ENCODE measurements at regions of chr5 and their contacts with region 1.

Region 1: GRCh38 chr5:66039296-66039695 is 104.8 kb upstream of the SREK1 start:
- DNase-seq: no peak

Region 2: GRCh38 chr5:65825408-65826328 is 213.6 kb before region 1 on chr5:
- intact Hi-C with region 1: loop called in 1 of 2 experiments (anchors 5 kb)
- DNase-seq: no peak

Region 3: DNA sequence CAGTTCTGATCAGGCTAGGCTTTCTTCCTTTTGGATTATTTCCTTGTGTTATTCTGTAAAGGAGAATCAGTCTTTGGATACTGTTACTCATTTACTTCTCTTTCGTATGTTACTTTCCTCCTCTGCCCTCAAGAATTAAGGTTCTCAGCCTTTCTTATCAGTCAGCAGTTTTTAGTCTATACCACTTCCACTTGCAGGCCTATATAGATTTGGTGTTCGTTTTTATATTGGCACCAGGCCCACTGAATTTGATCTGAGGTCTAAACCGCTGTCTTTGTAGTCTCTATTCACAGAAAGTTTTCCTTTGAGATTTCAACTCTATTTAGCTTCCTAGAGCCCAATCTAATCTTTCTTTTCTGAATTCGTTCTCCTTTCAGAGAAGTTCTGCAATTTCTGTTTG is 50.1 kb before region 1 on chr5:
- intact Hi-C with region 1: no loop called
- DNase-seq: no peak

Region 4: DNA sequence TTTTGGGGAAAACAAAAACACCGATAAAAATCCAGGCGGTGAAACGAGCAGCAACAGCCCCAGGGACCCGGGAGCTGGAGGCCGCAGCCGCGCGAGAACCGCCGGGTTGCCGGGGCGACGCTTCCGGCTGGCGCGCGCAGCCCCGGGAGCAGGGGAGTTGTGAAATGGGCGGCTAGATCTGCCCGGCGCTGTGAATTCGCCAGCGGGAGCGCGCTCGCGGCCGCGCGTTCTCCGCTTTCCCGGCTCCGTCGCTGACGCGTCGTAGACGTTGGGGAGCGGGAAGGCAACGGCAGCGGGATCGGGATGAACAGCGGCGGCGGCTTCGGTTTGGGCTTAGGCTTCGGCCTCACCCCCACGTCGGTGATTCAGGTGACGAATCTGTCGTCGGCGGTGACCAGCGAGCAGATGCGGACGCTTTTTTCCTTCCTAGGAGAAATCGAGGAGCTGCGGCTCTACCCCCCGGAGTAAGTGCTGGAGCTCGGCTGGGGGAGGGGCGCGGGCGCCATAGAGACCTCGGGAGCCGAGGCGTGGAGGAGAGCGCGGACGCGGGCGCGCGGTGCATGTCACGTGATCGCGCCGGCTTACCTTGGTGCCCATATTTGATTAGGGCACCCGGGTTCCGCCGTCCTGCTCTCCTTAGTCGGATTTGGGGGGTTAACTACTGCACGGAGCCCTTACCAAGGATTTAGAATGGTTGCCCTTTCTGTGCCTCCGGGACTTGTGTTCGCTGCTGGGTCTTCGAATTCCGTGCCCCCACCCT is 105.0 kb after region 1 on chr5 and contains the start of gene SREK1:
- intact Hi-C with region 1: no loop called
- DNase-seq: peak; percentile 98
- total RNA-seq, gene SREK1: 56.1 to 62.0 TPM

Measured in posterior vena cava (tissue), 2 donors.